ENCODE measurements at regions of chr9 and their contacts with region 1.

Region 1: DNA sequence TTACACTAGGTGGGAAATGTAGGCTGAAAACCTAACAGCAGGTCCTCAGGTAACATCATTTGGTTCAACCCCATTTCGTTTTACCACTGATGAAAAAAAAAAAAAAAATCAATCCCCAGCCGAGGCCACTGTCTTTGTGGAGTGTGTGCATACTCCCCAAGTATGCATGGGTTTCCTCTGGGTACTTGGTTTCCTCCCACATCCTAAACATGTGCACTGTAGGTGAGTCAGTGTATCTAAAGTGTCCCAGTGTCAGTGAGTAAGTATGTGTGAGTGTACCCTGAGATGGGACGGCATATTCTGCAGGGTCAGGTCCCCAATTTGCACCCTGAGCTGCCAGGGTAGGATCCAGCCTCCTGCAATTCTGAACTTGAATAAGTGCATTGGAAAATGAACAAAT is 966.5 kb upstream of the DMAC1 start:
- DNase-seq: no peak
- H3K4me3 ChIP-seq: no peak overlapping the region
- H3K27ac ChIP-seq: no peak overlapping the region
- H3K27me3 ChIP-seq: no peaks in the 10 kb centered on the region
- CTCF ChIP-seq: no peak

Region 2: DNA sequence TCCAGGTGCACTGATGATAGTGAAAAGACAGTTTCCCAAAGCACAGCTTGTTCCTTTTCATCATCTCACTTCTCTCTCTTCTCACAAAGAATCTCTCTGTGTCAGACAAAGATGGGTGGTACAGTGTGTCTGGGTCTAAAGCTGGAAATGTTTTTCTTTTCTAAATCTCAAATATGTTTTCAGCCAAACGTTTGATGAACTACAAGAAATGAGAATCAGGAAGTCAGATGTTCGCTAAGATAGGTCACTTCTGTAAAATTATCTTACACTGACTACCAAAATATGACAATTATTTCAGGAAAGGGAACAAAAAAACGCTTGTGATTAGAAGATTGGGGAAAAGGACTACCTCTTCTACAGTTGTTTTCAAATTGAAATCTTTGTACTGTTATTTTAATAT is 1137.9 kb after region 1 on chr9:
- CTCF ChIA-PET with region 1: interaction called, 10 read pairs
- POLR2A ChIA-PET with region 1: no interaction called
- DNase-seq: no peak
- H3K4me3 ChIP-seq: no peak overlapping the region
- H3K27ac ChIP-seq: no peak overlapping the region
- H3K27me3 ChIP-seq: no peaks in the 10 kb centered on the region
- CTCF ChIP-seq: no peak

Measured in AG04450 (cell line).